Heart right ventricle (tissue), 16 donors: ENCODE measurements at regions of chr6 and their contacts with region 1.

Region 1: GRCh38 chr6:170137176-170137891 is 153.5 kb downstream of the DLL1 start:
- DNase-seq: peak; percentile 45 to 81
- ATAC-seq: peak; percentile 74 to 92 (median 84)
- H3K4me3 ChIP-seq: peak overlapping the region in 4 of 10 donors; percentile 26 to 41 (median 38)
- H3K27ac ChIP-seq: peak overlapping the region; percentile 74 to 96 (median 86)
- H3K4me1 ChIP-seq: peaks cover 3 to 53% (median 38%) of the 10 kb centered on the region in 9 donors
- H3K27me3 ChIP-seq: no peaks in the 10 kb centered on the region
- CTCF ChIP-seq: peak in 1 of 9 donors; percentile 5

Region 2: DNA sequence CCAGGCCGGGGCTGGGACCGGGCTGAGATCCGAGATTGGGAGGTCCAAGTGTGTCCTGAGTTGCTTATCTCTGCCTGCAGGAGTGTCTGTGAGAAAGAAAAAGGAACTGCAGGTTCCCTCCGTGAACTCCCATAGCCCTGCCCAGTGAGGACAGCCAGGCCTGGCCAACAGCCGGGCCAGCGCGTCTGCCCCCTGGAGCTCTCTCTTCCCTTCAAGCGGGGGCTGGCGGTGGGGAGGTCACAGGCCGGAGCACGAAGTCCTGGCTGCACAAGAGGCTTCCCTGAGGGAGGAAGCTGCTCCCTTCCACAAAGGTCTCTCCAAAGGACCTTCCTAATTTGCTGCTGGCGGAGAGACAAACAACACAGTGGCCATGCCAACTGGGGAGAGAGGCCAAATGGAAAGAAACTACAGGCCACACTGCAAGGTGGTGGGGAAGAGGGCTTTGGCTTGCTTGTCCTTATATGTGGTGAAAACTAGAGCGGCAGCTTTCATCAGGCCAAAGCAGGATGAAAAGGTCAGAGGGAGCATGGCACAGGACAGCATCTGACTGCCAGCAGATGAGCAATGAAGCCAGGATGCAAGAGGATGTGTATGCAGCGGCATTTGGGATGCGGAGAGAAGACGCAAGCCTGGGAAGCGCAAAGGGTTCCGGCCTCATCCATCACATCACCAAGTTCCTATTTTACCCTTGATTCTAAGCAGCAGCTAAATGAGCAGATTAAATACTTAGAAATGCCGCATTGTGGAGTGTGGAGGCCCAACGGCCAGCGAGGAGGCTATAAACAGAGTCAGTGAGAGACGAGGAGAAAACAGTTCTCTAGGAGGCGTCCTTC is 125.9 kb before region 1 on chr6:
- intact Hi-C with region 1: loop called in 2 of 10 experiments (anchors 5 kb)
- DNase-seq: peak; percentile 69 to 81
- ATAC-seq: peak; percentile 74 to 98 (median 92)
- H3K4me3 ChIP-seq: no peak overlapping the region
- H3K27ac ChIP-seq: peak overlapping the region; percentile 0 to 82 (median 61)
- H3K4me1 ChIP-seq: peaks cover 6 to 19% (median 15%) of the 10 kb centered on the region in 9 donors
- H3K27me3 ChIP-seq: peaks cover 0 to 7% (median 0%) of the 10 kb centered on the region in 7 donors
- CTCF ChIP-seq: peak in 1 of 9 donors; percentile 20